Activated naive CD4-positive, alpha-beta T cell treated with anti-CD3 and anti-CD28 coated beads for 36 hours (primary cell): ENCODE measurements at regions of chr4 and their contacts with region 1.

Region 1: DNA sequence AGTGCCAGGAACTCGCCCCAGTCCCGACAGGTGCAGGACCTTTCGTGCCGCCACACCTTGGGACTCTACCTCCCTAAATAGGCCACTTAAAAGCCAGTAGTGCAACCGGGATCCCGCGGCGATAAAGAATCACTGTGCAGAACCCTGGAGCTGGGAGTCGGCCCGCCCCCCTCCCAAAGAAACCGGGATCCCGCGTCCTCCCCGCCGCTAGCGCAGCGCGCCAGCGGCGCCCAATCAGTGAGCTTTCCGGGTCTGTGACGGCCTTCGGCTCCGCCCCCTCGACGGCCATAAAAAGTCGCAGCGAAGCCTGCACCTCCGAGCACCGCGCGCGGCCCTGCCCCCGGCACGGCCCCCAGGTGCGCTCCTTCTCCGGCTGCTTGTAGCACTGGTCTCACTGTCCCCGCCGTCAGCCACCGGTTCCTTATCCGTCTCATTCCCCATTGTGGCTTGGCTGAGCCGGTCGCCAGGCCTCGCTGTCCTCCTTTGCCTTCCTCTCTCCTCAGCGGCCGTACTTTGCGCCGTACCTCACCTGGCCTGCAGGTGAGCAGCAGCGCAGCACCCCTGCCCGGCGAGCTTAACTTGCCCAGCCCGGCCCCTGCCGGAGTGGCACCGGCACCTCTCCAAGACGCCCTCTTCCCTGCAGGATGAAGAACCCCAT is at the start of gene LRAT:
- DNase-seq: peak; percentile 49
- H3K4me3 Mint-ChIP-seq: peak within 1 kb of the TSS; percentile 73
- H3K27ac Mint-ChIP-seq: no peak within 1 kb of the TSS
- H3K4me1 Mint-ChIP-seq: peaks cover 20% of the 10 kb centered on the region
- H3K27me3 Mint-ChIP-seq: peaks cover 67% of the 10 kb centered on the region
- total RNA-seq, gene LRAT: not detected

Region 2: DNA sequence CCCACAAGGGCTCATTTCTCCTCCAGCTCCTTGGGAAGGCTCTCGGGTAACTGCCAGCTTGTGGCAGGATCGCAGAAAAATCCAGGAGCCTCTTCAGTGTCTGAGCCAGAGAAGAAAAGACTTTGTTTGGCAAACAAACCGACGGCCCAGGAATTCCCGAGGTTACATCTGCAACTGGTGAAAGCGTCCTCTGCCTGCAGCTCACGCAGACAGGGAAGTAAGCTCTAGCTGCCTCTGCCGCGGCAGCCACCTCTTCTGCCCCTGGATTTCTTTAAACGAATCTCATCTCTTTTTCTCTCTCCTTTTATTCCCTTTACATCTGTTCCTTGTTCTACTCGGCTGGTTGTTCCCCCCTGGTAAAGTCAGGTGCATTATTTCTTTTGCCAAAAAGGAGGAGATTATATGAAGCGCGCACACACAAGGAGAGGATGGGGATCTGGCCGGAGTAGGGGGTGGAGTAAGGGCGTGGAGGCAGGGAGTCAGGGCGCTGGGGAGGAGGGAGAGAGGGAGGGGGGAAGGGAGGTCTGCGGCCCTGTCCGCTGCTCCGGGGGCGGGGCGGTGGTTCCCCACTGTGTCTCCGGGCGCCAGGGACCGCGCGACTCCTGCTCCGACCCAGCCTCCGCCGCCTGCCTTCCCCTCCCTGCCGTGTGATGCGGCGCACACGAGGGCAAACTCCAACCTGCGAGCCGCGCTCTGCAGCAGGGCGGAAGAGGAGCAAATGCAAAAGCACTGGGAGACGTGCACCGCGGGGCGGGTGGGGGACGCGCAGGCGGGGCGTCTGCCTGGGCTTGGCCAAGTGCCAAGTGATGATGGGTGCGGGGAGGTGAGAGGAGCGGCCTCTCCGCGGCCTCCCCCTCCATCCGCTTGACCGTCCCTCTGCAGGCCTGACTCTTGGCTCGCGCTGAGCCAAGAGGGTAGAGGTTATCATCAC is 252.2 kb before region 1 on chr4 and contains the start of gene DCHS2:
- CTCF ChIA-PET with region 1: no interaction called
- intact Hi-C with region 1: loop called (anchors 10 kb)
- DNase-seq: peak; percentile 45
- H3K4me3 Mint-ChIP-seq: peak within 1 kb of the TSS; percentile 66
- H3K27ac Mint-ChIP-seq: no peak within 1 kb of the TSS
- H3K4me1 Mint-ChIP-seq: peaks cover 16% of the 10 kb centered on the region
- H3K27me3 Mint-ChIP-seq: peaks cover 66% of the 10 kb centered on the region
- total RNA-seq, gene DCHS2: not detected